Right cardiac atrium (tissue), 5 donors: ENCODE measurements at regions of chr15 and their contacts with region 1.

Region 1: GRCh38 chr15:48861813-48862431 is 16.0 kb upstream of the EID1 start:
- DNase-seq: no peak
- ATAC-seq: peak; percentile 79 to 81
- H3K4me3 ChIP-seq: no peak overlapping the region
- H3K27ac ChIP-seq: no peak overlapping the region
- H3K4me1 ChIP-seq: no peaks in the 10 kb centered on the region
- H3K27me3 ChIP-seq: no peaks in the 10 kb centered on the region

Region 2: DNA sequence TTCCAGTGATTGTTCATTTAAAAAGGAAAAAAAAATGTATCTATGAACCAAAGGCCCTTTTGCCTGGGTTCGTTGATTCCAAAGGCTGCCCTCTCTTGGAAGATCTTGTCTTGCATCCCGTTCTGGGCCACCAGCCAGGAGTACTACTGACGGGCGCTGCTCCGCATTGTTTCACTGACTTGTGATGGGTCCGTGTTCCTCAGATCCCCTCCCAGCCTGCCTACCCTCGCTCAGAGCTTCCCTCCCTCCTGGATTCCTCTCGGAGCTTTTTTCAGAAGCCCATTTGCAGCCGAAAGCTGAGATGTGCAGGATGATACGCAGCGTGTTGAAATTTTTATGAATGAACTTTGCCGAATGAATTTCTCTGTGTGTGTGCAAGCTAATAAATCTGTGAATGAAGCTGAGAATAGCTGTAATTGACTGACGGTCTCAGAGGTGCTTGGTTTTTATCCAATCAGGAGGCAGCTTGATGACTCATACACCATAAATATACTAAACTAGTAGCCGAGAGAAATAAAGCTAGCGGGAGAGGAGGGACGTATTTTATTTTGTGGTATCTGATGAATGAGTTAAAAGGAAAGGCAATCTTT is 101.7 kb after region 1 on chr15 and contains the start of gene SHC4:
- intact Hi-C with region 1: loop called in 1 of 4 experiments (anchors 10 kb)
- DNase-seq: peak; percentile 79 to 90 (median 81)
- ATAC-seq: peak; percentile 80 to 86
- H3K4me3 ChIP-seq: peak within 1 kb of the TSS; percentile 69
- H3K27ac ChIP-seq: peak within 1 kb of the TSS; percentile 37
- H3K4me1 ChIP-seq: no peaks in the 10 kb centered on the region
- H3K27me3 ChIP-seq: no peaks in the 10 kb centered on the region
- total RNA-seq, gene SHC4: 2.6 to 6.6 (median 3.6) TPM

Region 3: DNA sequence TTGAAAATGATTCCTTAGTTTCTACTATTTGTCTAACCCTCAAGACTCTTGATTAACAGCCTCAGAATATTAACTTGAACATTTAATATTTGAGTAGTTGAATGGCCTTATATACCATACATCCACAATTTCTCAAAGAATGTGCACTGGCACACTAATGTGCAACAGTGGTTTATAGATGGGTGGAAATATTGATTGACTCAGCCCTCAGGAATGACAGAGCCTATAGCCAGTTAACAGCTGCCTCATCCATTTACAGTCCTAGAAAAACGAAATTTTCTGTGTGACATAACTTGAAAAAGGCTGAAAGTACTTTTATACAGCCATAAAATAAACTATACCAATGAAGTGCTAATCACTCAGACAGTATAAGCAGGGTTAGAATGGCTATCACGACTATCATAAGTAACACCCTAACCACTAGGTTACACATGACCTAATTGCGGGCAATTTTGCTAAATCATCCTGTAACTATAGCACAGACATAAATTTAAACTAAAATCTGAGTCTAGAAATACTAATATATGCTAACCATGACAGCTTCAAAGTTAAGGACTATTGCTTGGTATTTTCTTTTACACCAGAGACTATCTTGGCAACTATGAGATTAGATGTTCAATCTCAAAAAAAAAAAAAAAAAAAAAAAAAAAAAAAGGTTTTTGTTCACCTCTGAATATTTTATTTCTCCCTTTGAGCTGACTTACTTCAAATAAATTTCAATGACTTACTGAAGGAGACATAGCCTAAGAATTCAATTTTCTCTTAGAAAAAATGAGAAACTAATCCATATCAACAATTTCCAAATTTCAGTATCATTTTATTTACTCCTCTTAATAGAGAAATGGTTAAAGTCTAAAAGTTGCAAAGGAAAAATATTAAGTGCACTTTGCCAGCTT is 175.0 kb after region 1 on chr15:
- intact Hi-C with region 1: no loop called
- DNase-seq: no peak
- ATAC-seq: no peak
- H3K4me3 ChIP-seq: no peak overlapping the region
- H3K27ac ChIP-seq: no peak overlapping the region
- H3K4me1 ChIP-seq: peaks cover 6% of the 10 kb centered on the region
- H3K27me3 ChIP-seq: no peaks in the 10 kb centered on the region

Region 4: DNA sequence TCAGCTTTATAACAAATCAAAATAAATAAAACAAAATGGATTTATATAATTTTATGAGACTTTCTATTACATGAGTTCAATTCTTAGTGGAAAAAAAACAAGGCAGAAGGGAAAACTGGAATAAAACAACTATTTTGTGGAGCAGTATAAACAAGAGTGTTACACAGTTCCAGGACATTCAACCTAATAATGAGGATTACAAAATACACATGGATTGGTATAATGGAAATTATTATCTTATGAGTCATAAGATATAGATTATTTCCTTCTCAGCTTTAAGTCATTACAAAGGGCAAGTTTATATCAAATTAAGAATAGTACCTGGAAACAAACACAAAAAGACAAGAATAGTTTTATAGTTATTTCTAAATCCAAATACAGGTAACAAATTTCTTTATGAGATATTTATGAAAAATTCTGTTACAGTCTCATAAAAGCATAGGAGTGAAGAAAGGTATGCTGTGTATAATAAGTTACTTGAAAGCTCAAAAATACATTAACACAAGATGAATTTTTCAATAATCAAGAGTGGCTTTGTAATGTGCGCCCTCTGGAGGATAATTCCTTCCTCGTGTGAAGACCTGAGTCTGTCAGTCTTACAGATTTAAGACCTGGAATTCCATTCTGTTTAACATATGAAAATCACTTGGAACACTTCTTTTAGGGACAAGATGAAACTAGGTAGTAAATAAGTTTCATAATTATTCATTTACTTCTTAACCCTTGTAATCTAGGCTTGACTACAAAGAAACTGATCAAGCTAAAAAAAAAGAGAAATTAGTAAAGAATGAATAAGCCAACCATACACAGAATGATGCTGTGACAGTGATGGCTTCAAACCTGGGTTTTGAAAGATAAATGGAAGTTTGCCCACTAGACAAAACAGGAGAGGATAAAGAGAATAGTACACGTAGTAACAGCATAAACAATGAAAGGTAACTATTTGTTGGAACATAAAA is 284.0 kb after region 1 on chr15:
- intact Hi-C with region 1: loop called (anchors 5 to 10 kb)
- DNase-seq: no peak
- ATAC-seq: no peak
- H3K4me3 ChIP-seq: no peak overlapping the region
- H3K27ac ChIP-seq: no peak overlapping the region
- H3K4me1 ChIP-seq: peaks cover 3% of the 10 kb centered on the region
- H3K27me3 ChIP-seq: no peaks in the 10 kb centered on the region

Region 5: GRCh38 chr15:49421991-49422390 is 560.1 kb after region 1 on chr15:
- intact Hi-C with region 1: loop called in 1 of 4 experiments (anchors 10 kb)
- DNase-seq: peak; percentile 35 to 90 (median 78)
- ATAC-seq: peak; percentile 65 to 74
- H3K4me3 ChIP-seq: peak overlapping the region; percentile 22
- H3K27ac ChIP-seq: no peak overlapping the region
- H3K4me1 ChIP-seq: no peaks in the 10 kb centered on the region
- H3K27me3 ChIP-seq: no peaks in the 10 kb centered on the region

Region 6: GRCh38 chr15:50145451-50145872 is 1283.5 kb after region 1 on chr15:
- intact Hi-C with region 1: loop called in 2 of 4 experiments (anchors 5 to 10 kb)
- DNase-seq: no peak
- ATAC-seq: peak; percentile 85 to 90
- H3K4me3 ChIP-seq: no peak overlapping the region
- H3K27ac ChIP-seq: no peak overlapping the region
- H3K4me1 ChIP-seq: no peaks in the 10 kb centered on the region
- H3K27me3 ChIP-seq: no peaks in the 10 kb centered on the region